ENCODE measurements at regions of chr3 and their contacts with region 1.

Region 1: GRCh38 chr3:40179016-40179415 is 130.5 kb upstream of the EIF1B start:
- DNase-seq: peak; percentile 66 to 84
- ATAC-seq: peak; percentile 57 to 90 (median 75)
- H3K4me3 ChIP-seq: no peak overlapping the region
- H3K27ac ChIP-seq: no peak overlapping the region
- H3K4me1 ChIP-seq: no peaks in the 10 kb centered on the region
- H3K27me3 ChIP-seq: no peaks in the 10 kb centered on the region
- CTCF ChIP-seq: peak; percentile 82

Region 2: GRCh38 chr3:39541917-39542329 is 637.1 kb before region 1 on chr3:
- intact Hi-C with region 1: loop called in 1 of 2 experiments (anchors 10 kb)
- DNase-seq: no peak
- ATAC-seq: no peak
- H3K4me3 ChIP-seq: peak overlapping the region; percentile 48
- H3K27ac ChIP-seq: no peak overlapping the region
- H3K4me1 ChIP-seq: no peaks in the 10 kb centered on the region
- H3K27me3 ChIP-seq: no peaks in the 10 kb centered on the region
- CTCF ChIP-seq: peak; percentile 34

Region 3: GRCh38 chr3:39707314-39707909 is 471.6 kb before region 1 on chr3:
- intact Hi-C with region 1: loop called (anchors 5 kb)
- DNase-seq: no peak
- ATAC-seq: peak in 1 of 4 donors; percentile 49
- H3K4me3 ChIP-seq: no peak overlapping the region
- H3K27ac ChIP-seq: no peak overlapping the region
- H3K4me1 ChIP-seq: no peaks in the 10 kb centered on the region
- H3K27me3 ChIP-seq: no peaks in the 10 kb centered on the region
- CTCF ChIP-seq: peak; percentile 71

Region 4: GRCh38 chr3:39724233-39724846 is 454.7 kb before region 1 on chr3:
- intact Hi-C with region 1: loop called (anchors 5 kb)
- DNase-seq: no peak
- ATAC-seq: peak in 1 of 4 donors; percentile 62
- H3K4me3 ChIP-seq: no peak overlapping the region
- H3K27ac ChIP-seq: no peak overlapping the region
- H3K4me1 ChIP-seq: no peaks in the 10 kb centered on the region
- H3K27me3 ChIP-seq: no peaks in the 10 kb centered on the region
- CTCF ChIP-seq: peak; percentile 45

Region 5: DNA sequence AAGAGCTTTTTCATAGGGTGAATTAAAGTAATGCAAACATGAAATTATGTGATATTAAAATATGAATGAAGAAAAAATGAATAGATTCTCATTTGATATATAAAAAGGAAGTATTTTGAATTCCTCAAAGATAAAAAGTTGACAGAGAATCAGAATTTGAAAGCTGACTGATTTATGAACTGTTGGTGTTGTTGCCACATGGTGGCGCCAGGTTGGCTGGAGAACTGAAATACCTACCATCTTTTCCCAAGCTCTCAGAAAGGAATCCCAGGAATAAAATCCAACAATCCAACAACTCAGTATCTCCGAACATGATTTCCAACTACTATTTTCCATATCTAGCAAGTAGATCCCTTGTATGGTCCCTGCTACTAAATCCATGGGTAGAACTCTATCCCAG is 366.5 kb before region 1 on chr3:
- intact Hi-C with region 1: loop called in 1 of 2 experiments (anchors 2 kb)
- DNase-seq: no peak
- ATAC-seq: no peak
- H3K4me3 ChIP-seq: no peak overlapping the region
- H3K27ac ChIP-seq: no peak overlapping the region
- H3K4me1 ChIP-seq: peaks cover 15% of the 10 kb centered on the region
- H3K27me3 ChIP-seq: peaks cover 4 to 51% (median 5%) of the 10 kb centered on the region in 3 donors
- CTCF ChIP-seq: peak; percentile 8

Measured in psoas muscle (tissue), 8 donors.